ENCODE measurements at regions of chr4 and their contacts with region 1.

Region 1: GRCh38 chr4:15805583-15806517 is 27.7 kb downstream of the CD38 start:
- DNase-seq: no peak
- ATAC-seq: peak; percentile 83

Region 2: DNA sequence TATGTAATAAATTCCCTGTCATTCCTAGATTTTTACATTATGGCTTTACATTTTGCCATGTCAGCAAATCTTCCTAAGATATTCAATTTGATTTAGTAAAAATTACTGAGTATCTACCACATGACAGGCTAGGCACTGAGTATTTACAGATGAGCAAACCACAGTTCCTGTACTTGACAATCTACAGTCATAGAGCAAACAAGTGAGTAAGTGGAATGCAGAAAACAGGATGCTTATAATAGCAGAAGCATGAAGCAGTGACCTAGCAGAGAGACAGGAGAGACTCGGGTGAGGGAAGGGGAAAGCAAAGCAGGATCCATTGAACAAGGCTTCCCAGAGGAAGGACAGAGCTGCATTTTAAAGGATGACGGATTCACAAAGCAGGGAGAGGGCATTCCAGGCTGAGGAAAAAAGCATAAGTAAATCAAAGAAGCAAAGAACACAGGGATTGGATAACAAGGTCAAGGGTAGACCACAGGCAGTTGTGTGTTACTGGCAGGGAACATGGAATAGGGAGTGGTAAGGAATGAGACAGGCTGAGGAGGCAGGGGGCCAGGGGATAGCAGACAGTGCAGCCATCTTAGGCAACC is 502.7 kb before region 1 on chr4:
- intact Hi-C with region 1: no loop called
- DNase-seq: no peak
- ATAC-seq: no peak

Region 3: GRCh38 chr4:15598644-15599043 is 207.2 kb before region 1 on chr4:
- intact Hi-C with region 1: no loop called
- DNase-seq: no peak
- ATAC-seq: no peak

Region 4: DNA sequence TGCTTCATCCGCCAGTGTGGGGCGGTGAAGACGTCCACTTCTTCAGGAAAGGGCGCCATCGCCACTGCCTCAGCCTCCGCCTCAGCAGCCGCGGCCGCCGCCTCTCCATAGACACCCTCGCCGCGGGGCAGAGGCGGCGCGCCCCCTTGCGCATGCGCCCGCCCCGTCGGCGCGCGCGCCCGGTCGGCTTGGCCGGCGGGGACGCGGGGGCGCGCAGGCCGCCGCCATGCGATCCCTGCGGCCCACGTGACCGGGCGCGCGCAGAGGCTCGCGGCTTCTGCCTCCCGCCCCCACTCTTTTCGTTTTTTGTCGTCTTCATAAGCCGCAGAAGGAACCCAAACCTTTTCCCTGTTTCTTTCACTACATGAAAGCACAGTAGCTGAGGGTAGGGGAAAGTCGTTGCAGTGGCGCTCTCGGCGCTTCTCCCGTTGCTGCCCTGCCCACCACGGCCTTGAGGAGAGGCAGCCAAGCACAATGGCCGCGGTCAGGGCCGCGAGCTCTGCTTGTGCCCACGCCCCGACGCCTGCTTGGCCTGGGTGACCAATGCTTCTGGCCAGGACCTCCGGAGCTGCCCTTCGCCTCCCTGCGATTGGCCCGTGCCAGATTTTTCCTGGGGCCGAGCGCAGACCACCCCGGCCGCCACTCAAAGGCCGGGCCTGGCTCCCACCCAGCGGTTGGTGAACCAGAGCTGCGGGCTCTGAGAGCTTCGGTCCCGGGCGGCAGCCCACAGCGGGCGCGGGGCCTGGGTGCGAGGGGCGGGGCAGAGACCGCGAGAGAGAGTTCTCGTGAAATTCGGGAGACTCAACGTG is 150.4 kb before region 1 on chr4 and contains the start of gene FBXL5:
- intact Hi-C with region 1: no loop called
- DNase-seq: peak; percentile 90
- ATAC-seq: peak; percentile 92
- total RNA-seq, gene FBXL5: 99.0 TPM

Region 5: DNA sequence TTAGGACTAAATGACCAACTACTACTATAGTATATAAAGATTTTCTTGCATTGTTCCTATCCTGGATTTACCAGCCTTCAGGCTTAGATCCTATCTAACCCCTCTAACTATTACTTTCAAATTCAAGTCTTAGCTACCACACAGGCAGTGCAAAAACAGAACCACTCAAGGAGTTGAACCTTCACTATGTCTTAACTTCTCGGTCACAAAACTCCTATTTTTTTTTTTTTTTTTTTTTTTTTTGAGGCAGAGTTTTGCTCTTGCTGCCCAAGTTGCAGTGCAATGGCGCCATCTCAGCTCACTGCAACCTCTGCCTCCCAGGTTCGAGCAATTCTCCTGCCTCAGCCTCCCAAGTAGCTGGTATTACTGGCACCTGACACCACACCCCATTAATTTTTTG is 130.5 kb before region 1 on chr4:
- intact Hi-C with region 1: no loop called
- DNase-seq: no peak
- ATAC-seq: no peak

Region 6: GRCh38 chr4:15956179-15956850 is 150.5 kb after region 1 on chr4:
- intact Hi-C with region 1: loop called (anchors 5 kb)
- DNase-seq: peak; percentile 80
- ATAC-seq: peak; percentile 94

Region 7: DNA sequence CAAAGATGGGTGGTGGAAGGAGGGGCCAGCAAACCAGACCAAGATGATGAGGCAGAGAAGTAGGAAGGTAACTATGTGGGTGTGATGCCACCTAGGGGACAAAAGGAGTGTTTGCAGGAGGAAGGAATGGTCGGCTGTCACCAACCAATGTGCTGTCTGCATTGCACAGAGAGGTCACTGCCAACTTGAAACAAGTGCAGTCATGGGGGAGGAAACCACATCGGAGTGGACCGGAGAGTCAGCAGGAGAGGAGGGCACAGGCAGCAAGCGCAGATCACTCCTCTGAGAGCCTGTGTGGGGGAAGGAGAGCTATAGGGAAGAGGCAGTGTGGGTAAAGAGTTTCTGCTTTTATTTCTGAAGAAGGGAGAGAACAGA is 195.6 kb after region 1 on chr4:
- intact Hi-C with region 1: loop called (anchors 10 kb)
- DNase-seq: peak; percentile 48
- ATAC-seq: peak; percentile 96